Activated CD4-positive, alpha-beta T cell treated with anti-CD3 and anti-CD28 coated beads, Interleukin-2, amount 10 ng/mL, durations not matched to agents 7 days and 5 days (primary cell): ENCODE measurements at regions of chr4 and their contacts with region 1.

Region 1: DNA sequence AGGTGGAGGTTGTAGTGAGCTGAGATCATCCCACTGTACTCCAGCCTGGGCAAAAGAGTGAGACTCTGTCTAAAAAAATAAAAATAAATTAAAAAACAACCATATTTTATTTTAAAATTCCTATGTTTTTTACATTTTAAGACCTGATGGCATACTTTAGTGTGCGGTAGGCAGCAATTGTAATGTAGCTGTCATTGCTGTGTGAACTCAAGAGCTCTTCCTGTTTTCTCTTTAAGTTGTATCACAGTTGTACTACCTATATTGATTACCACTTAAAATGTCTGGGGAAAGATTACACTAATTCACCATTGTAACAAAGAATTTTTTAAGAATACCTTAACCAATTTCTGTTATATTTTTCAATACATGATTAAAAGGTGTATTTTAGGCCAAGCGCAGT is 27.3 kb downstream of the ABCE1 start:
- DNase-seq: no peak
- H3K4me3 Mint-ChIP-seq: no peak overlapping the region
- H3K27ac Mint-ChIP-seq: peak overlapping the region; percentile 95
- H3K4me1 Mint-ChIP-seq: peaks cover 47% of the 10 kb centered on the region
- H3K27me3 Mint-ChIP-seq: no peaks in the 10 kb centered on the region

Region 2: DNA sequence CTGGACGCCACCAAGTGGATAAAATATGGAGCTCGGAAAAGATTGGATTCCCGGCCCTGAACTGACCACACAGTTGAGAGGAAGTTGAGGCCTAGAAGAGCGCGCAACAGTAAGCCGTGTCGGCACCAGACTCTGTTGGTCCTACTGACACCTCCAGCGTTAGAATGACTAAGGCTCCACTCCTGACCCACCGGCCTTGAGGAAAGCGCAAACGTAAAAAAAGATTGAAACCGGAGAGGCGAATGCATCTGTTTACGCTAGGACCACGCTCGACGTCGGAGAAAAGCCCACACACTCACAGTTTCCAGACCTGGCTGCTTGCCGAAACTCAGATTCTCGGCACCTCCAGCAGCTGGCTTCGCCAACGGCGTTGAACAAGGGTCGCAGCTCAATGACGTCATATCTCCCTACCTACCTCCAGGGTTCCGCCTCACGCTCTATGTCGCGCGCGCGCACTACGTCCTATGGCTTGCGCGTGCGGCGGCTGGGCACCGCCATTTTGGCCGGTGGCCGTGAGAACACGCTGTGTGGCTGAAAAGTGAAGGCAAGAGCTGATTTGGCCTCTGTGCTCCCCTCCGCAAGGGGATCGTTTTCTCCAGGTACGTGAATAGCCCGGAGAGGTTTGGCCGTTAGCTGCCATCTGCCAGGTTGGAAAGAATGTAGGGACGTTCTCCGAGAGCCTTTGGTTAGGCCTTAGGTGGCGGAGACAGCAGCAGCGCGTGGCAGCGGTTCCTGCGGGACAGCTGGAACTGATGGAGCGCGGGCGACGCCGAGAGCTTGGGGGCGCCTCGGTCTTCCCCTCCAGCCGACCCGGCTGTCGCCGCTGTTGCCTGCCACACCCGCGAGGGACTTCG is 27.3 kb before region 1 on chr4 and contains the starts of genes ABCE1 and ANAPC10:
- CTCF ChIA-PET with region 1: interaction called, 11 read pairs
- POLR2A ChIA-PET with region 1: no interaction called
- DNase-seq: peak; percentile 97
- H3K4me3 Mint-ChIP-seq: peak within 1 kb of the TSS; percentile 94
- H3K27ac Mint-ChIP-seq: peak within 1 kb of the TSS; percentile 98
- H3K4me1 Mint-ChIP-seq: peaks cover 30% of the 10 kb centered on the region
- H3K27me3 Mint-ChIP-seq: no peaks in the 10 kb centered on the region
- total RNA-seq, gene ABCE1: 62.1 to 72.3 TPM
- total RNA-seq, gene ANAPC10: 23.5 to 25.4 TPM

Region 3: GRCh38 chr4:145155268-145155870 is 30.0 kb after region 1 on chr4:
- CTCF ChIA-PET with region 1: no interaction called
- POLR2A ChIA-PET with region 1: no interaction called
- DNase-seq: no peak
- H3K4me3 Mint-ChIP-seq: no peak overlapping the region
- H3K27ac Mint-ChIP-seq: peak overlapping the region; percentile 9
- H3K4me1 Mint-ChIP-seq: peaks cover 16% of the 10 kb centered on the region
- H3K27me3 Mint-ChIP-seq: no peaks in the 10 kb centered on the region